ENCODE measurements at regions of chr11 and their contacts with region 1.

Region 1: DNA sequence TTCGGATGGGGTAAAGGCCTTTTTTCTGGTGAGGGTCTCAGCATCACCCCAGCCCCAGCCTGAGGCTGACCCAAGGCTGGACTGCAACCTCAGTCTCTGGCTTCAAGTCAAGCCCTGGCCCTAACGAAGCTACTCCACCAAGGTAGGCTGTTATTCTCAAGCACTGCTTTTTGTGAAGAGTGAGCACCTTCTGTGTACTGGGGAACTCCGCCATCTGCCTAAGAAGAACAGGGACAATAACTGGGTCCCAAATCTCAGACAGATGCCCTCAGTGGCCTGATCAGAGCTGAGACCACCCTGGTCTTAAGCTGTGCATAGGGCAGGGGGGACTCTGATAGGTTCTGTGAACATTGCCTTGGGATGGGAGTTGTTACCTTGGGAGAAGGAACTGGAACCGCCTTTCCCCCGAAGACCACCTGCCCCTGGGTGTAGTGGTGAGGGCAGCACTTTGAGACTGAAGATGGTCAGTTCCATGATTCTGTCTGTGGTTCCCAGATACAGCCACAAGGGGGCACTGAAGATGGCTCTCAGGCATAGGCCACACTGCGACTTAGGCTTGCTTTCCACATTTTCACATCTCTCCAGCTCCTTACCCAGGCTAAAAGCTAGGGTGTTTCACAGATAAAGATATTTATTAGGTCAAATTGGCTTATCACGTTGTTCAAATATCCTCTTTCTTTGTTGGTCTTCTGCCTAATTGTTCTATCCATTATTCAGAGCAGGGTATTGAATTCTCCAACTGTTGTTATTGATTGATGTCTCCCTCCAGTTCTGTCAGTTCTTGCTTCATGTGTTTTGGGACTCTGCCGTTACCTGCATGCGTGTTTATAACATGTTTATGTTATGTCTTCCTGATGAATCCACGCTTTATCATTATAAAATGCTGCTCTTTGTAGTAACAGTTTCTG is 11.8 kb upstream of the UVRAG start:
- DNase-seq: peak; percentile 78 to 95
- H3K4me3 ChIP-seq: no peak overlapping the region
- CTCF ChIP-seq: peak in 1 of 3 donors; percentile 81
- POLR2A ChIP-seq: no peak

Region 2: DNA sequence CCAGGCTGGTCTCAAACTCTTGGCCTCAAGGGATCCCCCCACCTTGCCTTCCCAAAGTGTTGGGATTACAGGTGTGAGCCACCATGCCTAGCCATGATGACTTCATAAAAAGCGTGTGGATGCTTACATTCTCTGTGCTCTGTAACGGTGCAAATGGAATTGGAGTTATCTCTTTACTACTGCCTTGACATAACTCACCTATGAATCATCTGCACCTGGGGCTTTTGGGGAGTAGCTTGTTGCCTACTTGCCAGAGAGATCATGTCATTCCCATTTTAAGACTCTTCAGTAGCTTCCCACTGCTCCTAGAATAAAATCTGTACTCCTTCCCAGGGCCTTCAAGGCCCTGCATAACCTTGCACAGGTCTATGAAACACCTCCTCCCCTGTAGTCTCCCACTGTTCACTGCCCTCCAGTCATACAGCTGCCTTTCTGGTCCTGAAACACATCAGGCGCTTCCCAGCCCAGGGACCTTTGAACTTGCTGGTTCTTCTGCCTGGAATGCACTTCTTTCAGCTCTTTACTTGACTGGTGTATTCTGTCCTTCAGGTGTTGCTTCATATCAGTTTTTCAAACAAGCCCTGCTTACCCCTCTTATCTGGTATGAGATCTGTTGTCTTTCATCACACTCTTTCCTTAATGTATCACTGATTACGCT is 105.1 kb before region 1 on chr11:
- intact Hi-C with region 1: no loop called
- DNase-seq: no peak
- H3K4me3 ChIP-seq: no peak overlapping the region
- CTCF ChIP-seq: no peak
- POLR2A ChIP-seq: no peak

Region 3: GRCh38 chr11:75867775-75868374 is 64.7 kb after region 1 on chr11:
- intact Hi-C with region 1: loop called (anchors 1 kb)
- DNase-seq: peak in 1 of 2 donors; percentile 29
- H3K4me3 ChIP-seq: no peak overlapping the region
- CTCF ChIP-seq: no peak
- POLR2A ChIP-seq: no peak

Region 4: GRCh38 chr11:76148941-76149613 is 345.9 kb after region 1 on chr11:
- intact Hi-C with region 1: no loop called
- DNase-seq: peak in 1 of 2 donors; percentile 77
- H3K4me3 ChIP-seq: no peak overlapping the region
- CTCF ChIP-seq: no peak
- POLR2A ChIP-seq: no peak

Region 5: DNA sequence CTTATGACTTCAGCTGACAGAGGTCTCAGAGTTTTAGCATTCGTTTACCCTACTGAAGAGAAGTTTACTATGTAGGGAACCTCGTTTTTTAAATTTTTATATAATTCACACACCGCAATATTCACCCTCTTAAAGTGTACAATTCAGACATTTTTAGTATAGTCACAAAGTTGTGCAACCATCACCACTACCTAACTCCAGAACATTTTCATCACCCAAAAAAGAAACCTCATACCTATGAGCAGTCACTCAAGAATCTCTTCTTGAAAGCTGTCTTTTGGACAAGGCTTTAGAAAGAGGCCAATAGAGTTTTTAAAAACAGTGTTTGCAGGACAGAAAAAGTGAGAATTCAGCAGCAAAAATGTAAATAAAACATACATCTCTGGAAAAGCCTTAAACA is 1874.0 kb after region 1 on chr11:
- intact Hi-C with region 1: no loop called
- DNase-seq: no peak
- H3K4me3 ChIP-seq: no peak overlapping the region
- CTCF ChIP-seq: no peak
- POLR2A ChIP-seq: no peak